ENCODE measurements at regions of chr12 and their contacts with region 1.

Region 1: DNA sequence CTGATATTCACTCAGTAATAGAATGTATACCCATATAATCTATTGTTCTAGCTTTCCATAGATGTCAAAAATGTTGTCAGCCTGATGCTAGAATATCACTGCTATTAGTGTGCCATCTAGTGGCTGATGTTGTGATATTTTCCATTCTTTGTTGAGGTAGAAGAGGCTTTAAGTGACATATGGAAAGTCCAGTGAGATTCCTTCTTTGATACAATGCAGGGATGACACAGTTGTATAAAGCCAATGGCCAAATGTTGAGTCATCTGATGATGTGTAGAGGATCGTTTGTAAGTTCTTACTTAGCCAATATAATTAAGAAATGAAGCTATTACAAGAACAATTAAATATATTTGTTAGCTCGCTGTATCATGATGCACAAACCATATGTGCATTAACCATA is 58.1 kb upstream of the PCED1B start:
- DNase-seq: peak; percentile 18 to 52 (median 47)
- H3K4me3 ChIP-seq: no peak overlapping the region
- H3K4me3 Mint-ChIP-seq: no peak overlapping the region
- H3K27ac ChIP-seq: no peak overlapping the region
- H3K27ac Mint-ChIP-seq: no peak overlapping the region
- H3K4me1 ChIP-seq: no peaks in the 10 kb centered on the region
- H3K4me1 Mint-ChIP-seq: peaks cover 9% of the 10 kb centered on the region
- H3K27me3 ChIP-seq: no peaks in the 10 kb centered on the region
- H3K27me3 Mint-ChIP-seq: peaks cover 0 to 2% (median 1%) of the 10 kb centered on the region in 3 donors
- CTCF ChIP-seq: peak; percentile 85

Region 2: DNA sequence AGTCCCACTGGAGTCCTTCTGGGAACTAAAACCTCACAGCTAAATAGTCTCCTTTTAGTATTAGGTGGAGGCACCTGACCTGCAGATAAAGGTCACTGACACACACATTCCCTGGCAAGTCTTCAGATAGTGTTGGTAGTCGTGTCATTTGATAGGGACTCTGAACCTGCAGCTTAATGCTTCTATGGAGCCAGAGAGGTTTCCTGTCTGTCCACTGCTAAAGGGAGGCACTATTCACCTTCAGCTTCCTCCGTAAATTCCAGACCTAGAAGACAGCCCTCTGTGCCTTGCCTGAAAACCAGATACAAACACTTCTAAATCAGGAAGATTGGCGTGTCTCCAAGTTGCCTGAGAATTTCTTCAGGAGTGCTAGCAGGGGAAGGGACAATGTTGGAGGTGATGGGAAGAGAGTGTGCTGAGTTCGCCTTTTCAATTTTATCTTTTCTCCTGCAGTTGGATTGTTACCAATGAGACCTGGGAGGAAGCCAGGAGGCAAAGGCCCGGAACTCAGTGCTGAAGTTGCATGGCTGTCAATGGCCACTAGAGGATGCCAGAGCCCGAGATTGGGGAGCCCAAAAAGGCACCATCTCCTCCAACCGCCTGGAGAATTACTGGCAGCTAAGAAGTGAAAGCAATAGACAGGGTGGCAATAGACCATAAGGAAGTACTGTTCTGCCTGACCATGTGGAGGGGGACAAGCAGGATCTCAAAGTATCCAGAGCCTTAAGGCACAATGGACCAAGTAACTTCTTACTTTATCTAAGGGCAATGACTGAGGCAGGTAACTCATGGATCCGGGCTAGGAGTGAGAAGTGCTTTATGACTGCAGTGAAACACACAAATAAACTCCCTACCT is 949.3 kb before region 1 on chr12:
- intact Hi-C with region 1: loop called in 1 of 2 experiments (anchors 2 kb)
- DNase-seq: peak; percentile 43 to 55 (median 47)
- H3K4me3 ChIP-seq: no peak overlapping the region
- H3K4me3 Mint-ChIP-seq: peak overlapping the region in 1 of 2 donors; percentile 31
- H3K27ac ChIP-seq: no peak overlapping the region
- H3K27ac Mint-ChIP-seq: no peak overlapping the region
- H3K4me1 ChIP-seq: no peaks in the 10 kb centered on the region
- H3K4me1 Mint-ChIP-seq: peaks cover 6% of the 10 kb centered on the region
- H3K27me3 ChIP-seq: no peaks in the 10 kb centered on the region
- H3K27me3 Mint-ChIP-seq: peaks cover 0 to 2% (median 2%) of the 10 kb centered on the region in 3 donors
- CTCF ChIP-seq: peak; percentile 93

Region 3: DNA sequence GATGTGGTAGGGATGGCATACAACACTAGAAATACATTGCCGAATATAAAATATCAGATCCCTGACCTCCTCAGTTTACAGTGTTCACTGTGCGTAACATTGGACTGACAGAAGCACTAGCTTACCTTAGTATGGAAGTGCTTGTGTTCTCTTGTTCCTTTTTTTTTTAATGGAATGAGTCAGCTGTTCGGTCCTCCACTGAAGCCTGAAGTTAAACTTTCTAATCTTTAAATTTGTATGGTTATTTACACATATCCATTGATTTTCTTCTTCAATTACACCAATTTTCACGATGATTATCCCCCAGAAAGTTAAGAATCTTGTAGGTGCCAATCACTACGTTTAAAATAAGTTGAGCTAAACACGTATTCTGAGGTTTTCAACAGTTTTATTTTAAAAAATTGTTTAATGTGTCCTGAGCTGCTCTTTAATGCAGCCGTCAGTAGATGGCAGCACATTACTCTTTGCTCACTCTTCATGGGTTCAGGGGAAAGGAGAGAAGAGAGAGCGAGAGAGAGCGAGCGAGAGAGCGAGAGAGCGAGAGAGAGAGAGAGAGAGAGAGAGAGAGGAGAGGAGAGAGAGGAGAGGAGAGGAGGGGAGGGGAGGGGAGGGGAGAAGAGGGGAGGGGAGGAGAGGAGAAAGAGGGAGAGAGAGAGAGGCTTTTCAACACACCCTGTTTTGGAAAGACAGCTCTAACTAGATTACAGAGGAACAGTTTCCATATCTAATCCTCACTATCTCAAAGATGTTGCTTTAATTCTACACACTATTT is 896.3 kb before region 1 on chr12:
- intact Hi-C with region 1: loop called in 1 of 2 experiments (anchors 10 kb)
- DNase-seq: peak; percentile 27 to 52 (median 38)
- H3K4me3 ChIP-seq: peak overlapping the region in 1 of 3 experiments; percentile 30
- H3K4me3 Mint-ChIP-seq: peak overlapping the region; percentile 24 to 84
- H3K27ac ChIP-seq: no peak overlapping the region
- H3K27ac Mint-ChIP-seq: no peak overlapping the region
- H3K4me1 ChIP-seq: no peaks in the 10 kb centered on the region
- H3K4me1 Mint-ChIP-seq: peaks cover 5% of the 10 kb centered on the region
- H3K27me3 ChIP-seq: peaks cover 0 to 2% of the 10 kb centered on the region in 2 donors
- H3K27me3 Mint-ChIP-seq: peaks cover 1 to 6% (median 2%) of the 10 kb centered on the region in 3 donors
- CTCF ChIP-seq: peak; percentile 67

Region 4: DNA sequence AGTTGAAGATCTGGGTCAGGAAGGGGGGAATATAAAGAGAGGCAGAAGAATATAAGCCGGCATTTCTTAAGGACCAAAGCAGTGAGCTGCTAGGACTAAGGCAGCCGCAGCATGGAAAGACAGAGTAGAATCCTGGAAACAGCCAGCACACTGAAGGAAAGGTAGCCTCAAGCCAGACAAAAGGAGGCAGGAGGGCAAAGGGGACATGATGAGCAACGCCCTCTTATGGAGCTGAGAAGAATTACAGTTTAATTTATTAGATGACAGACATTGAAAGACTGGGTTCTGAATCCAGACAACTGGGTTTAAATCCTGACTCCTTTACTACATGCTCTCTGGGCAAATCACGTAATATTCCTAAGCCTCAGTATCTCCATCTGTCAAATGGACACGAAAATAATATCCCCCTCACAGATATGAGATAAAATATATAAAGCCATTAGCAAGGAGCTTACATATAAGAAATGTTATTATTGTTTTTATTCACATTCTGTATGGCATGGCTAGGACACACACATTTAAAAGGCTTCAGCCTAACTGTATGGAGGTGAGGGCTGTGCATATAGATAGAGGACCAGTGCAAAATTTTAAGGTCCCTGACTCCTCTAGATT is 50.0 kb after region 1 on chr12:
- intact Hi-C with region 1: no loop called
- DNase-seq: peak in 2 of 3 donors; percentile 21 to 24
- H3K4me3 ChIP-seq: no peak overlapping the region
- H3K4me3 Mint-ChIP-seq: no peak overlapping the region
- H3K27ac ChIP-seq: no peak overlapping the region
- H3K27ac Mint-ChIP-seq: no peak overlapping the region
- H3K4me1 ChIP-seq: no peaks in the 10 kb centered on the region
- H3K4me1 Mint-ChIP-seq: no peaks in the 10 kb centered on the region
- H3K27me3 ChIP-seq: no peaks in the 10 kb centered on the region
- H3K27me3 Mint-ChIP-seq: peaks cover 0 to 7% (median 6%) of the 10 kb centered on the region in 3 donors
- CTCF ChIP-seq: peak; percentile 72

Region 5: DNA sequence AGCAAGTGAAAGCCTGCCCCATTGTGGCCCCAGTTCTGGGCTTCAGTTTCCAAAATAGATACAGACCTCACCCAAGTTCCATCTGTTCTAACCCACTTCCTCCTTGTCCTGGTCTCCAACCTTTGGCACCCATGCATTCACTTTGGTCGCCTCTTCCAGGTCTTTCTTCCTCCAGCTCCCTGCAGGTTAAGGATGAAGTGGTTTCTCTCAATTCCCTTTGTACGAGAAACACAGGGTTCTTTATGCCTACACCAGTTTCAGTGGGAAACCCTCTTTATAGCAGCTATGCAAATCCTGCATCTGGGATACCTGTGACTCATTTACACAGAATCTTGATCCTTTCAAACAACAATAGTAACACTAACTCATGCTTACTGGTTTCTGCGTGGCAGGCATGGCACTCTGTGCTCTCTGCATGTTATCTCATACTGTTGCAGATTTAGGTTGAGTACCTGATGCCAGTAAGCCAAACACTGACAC is 169.0 kb after region 1 on chr12:
- intact Hi-C with region 1: no loop called
- DNase-seq: no peak
- H3K4me3 ChIP-seq: no peak overlapping the region
- H3K4me3 Mint-ChIP-seq: no peak overlapping the region
- H3K27ac ChIP-seq: no peak overlapping the region
- H3K27ac Mint-ChIP-seq: peak overlapping the region in 1 of 7 donors; percentile 61
- H3K4me1 ChIP-seq: peaks cover 29 to 45% of the 10 kb centered on the region in 2 donors
- H3K4me1 Mint-ChIP-seq: peaks cover 55% of the 10 kb centered on the region
- H3K27me3 ChIP-seq: no peaks in the 10 kb centered on the region
- H3K27me3 Mint-ChIP-seq: peaks cover 0 to 2% (median 0%) of the 10 kb centered on the region in 3 donors
- CTCF ChIP-seq: no peak